Dendritic cell treated with granulocyte-macrophage colony-stimulating factor and Interleukin-4, amounts not matched to agents 40 ng/mL and 50 ng/mL, for 4 days (primary cell): ENCODE measurements at regions of chr7 and their contacts with region 1.

Region 1: GRCh38 chr7:33185786-33186185 is 56.4 kb downstream of the BBS9 start:
- H3K4me3 Mint-ChIP-seq: no peak overlapping the region
- H3K27ac Mint-ChIP-seq: no peak overlapping the region
- H3K4me1 Mint-ChIP-seq: peaks cover 4% of the 10 kb centered on the region
- H3K27me3 Mint-ChIP-seq: no peaks in the 10 kb centered on the region

Region 2: DNA sequence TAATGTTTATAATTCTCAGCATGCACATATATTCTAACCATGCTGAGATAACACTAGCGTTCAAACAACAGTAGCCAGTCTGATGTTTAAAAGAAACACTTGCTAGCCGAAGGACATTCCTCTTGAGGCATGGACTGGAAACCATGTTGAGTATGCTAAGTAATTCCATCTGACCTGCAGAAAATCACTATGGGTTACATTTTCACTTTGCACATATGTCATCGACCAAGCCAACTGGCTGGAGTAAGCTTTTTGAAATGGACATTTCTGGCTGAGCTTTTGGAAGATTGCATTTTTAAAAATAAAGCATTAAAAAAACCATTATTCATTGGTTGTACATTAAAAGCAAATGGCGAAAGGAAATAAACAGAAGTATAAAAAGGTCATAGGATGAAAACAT is 31.8 kb after region 1 on chr7:
- intact Hi-C with region 1: no loop called
- H3K4me3 Mint-ChIP-seq: no peak overlapping the region
- H3K27ac Mint-ChIP-seq: no peak overlapping the region
- H3K4me1 Mint-ChIP-seq: no peaks in the 10 kb centered on the region
- H3K27me3 Mint-ChIP-seq: no peaks in the 10 kb centered on the region

Region 3: DNA sequence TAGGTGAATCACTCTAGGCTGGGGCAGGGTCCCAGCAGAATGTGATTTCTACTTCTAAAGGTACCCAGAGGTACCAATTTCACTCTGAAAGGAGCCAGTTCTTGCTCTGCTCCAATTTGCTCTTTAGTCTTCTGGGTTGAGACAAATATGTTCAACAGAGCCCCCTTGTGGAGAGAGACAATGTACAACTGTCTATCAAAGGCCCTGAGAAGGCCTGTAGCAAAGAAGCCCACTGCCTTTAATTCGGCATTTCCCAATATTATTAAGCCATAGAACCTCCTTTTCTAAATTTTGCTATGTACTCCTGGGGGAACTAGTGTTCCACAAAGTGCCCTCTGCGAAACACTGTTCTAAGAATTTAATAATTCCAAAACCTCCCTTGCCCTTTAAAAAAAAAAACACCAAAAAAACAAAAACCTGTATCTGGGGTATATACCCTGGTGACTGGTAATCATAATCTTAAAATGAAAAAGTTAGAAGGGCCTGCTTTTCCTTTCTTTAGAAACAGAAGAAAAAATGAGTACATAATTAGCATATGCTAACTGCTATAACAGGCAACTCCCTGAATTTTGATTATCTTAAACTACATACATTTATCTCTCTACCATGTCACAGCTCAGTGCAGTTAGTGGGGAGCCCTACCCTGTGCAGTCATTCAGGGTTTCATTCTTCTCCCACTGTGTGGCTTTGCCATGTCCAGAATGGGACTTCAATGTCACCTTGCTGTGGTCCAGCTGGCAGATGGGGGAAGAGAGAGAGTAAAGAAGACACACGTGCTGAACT is 558.7 kb after region 1 on chr7:
- intact Hi-C with region 1: loop called (anchors 5 kb)
- H3K4me3 Mint-ChIP-seq: no peak overlapping the region
- H3K27ac Mint-ChIP-seq: no peak overlapping the region
- H3K4me1 Mint-ChIP-seq: no peaks in the 10 kb centered on the region
- H3K27me3 Mint-ChIP-seq: no peaks in the 10 kb centered on the region

Region 4: GRCh38 chr7:33750177-33750576 is 564.4 kb after region 1 on chr7:
- intact Hi-C with region 1: loop called (anchors 5 kb)
- H3K4me3 Mint-ChIP-seq: no peak overlapping the region
- H3K27ac Mint-ChIP-seq: no peak overlapping the region
- H3K4me1 Mint-ChIP-seq: no peaks in the 10 kb centered on the region
- H3K27me3 Mint-ChIP-seq: no peaks in the 10 kb centered on the region

Region 5: DNA sequence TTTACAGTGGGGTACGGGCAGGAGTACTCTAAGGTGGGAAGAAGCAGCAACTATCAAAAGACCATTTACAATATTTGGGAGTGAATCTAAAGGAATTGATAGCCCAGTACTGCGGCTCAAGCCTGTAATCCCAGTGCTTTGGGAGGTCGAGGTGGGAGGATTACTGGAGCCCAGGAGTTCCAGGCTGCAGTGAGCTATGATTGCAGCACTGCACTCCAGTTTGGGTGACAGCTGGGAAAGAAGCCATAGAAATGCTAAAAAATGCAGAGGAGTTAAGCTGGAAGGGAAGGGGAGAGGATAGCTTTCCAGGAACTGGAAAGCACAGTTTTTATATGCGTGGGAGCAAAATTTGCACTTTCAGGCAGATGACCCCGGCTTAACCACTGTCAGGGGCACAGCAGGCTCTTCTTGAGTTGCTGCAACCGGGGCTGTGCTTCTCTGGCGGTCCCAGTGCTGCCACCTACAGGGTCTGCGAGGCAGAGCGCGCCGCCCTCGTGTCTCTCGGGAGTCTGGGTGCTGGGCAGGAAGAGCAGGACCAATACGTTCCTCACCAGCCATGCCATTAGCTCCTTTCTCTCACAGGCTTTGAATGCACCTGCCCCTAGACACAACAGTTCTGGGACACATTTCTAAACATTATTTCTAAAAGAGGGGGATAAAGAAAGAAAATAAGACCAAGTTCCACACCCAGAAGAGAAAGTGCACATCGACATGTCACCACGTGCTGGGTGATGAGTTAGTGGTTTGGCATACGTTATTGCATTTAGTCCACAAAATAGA is 709.4 kb after region 1 on chr7:
- intact Hi-C with region 1: loop called (anchors 10 kb)
- H3K4me3 Mint-ChIP-seq: no peak overlapping the region
- H3K27ac Mint-ChIP-seq: no peak overlapping the region
- H3K4me1 Mint-ChIP-seq: peaks cover 8% of the 10 kb centered on the region
- H3K27me3 Mint-ChIP-seq: peaks cover 12% of the 10 kb centered on the region